PC-9 (cell line): ENCODE measurements at regions of chr10 and their contacts with region 1.

Region 1: GRCh38 chr10:65708057-65708456 is 1217.8 kb upstream of the LRRTM3 start:
- DNase-seq: no peak
- H3K4me3 ChIP-seq: no peak overlapping the region
- H3K27ac ChIP-seq: no peak overlapping the region
- H3K4me1 ChIP-seq: no peaks in the 10 kb centered on the region
- H3K27me3 ChIP-seq: no peaks in the 10 kb centered on the region
- CTCF ChIP-seq: no peak

Region 2: DNA sequence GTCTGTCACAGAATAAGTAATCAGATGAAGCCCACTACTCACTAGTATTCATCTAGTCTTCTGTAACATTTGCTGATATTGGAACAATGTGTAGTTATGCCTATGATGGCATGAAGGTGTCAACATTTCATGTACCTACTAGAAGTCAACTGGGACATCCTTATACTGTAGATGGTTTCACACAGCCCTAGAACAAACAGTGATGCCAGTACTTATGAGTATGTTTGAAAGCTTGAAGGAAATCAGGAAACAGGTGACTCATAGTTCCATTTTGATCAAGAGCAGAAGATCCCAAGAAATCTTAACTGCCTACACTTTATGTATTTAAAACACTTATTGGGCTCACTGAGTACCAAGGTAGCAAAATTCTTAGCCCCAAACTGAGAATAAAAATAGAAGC is 667.3 kb before region 1 on chr10:
- CTCF ChIA-PET with region 1: no interaction called
- POLR2A ChIA-PET with region 1: no interaction called
- intact Hi-C with region 1: loop called (anchors 5 kb)
- DNase-seq: no peak
- H3K4me3 ChIP-seq: no peak overlapping the region
- H3K27ac ChIP-seq: no peak overlapping the region
- H3K4me1 ChIP-seq: no peaks in the 10 kb centered on the region
- H3K27me3 ChIP-seq: no peaks in the 10 kb centered on the region
- CTCF ChIP-seq: no peak